Activated CD4-positive, alpha-beta memory T cell treated with anti-CD3 and anti-CD28 coated beads for 36 hours (primary cell): ENCODE measurements at regions of chr15 and their contacts with region 1.

Region 1: GRCh38 chr15:59736184-59736583 is 47.1 kb upstream of the BNIP2 start:
- DNase-seq: no peak
- H3K4me3 Mint-ChIP-seq: no peak overlapping the region
- H3K27ac Mint-ChIP-seq: no peak overlapping the region
- H3K4me1 Mint-ChIP-seq: no peaks in the 10 kb centered on the region
- H3K27me3 Mint-ChIP-seq: peaks cover 2% of the 10 kb centered on the region

Region 2: DNA sequence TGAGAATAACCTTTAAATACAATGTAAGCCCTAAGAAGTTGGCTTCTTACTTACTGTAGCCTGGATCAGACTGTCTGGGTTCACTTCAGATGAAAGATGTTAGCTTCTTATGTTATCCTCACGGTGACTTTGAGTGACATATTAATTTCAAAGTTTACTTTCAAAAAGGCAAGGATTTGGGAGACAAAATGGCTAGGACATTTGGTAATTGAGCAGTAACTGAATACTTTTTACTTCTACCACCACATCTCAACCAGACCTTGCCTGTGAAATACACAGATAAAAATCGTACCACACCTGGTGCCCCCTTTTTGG is 11.1 kb before region 1 on chr15:
- CTCF ChIA-PET with region 1: interaction called, 10 read pairs
- POLR2A ChIA-PET with region 1: no interaction called
- intact Hi-C with region 1: no loop called
- DNase-seq: no peak
- H3K4me3 Mint-ChIP-seq: no peak overlapping the region
- H3K27ac Mint-ChIP-seq: no peak overlapping the region
- H3K4me1 Mint-ChIP-seq: no peaks in the 10 kb centered on the region
- H3K27me3 Mint-ChIP-seq: peaks cover 7% of the 10 kb centered on the region

Region 3: GRCh38 chr15:59797756-59798604 is 61.8 kb after region 1 on chr15:
- CTCF ChIA-PET with region 1: no interaction called
- POLR2A ChIA-PET with region 1: no interaction called
- intact Hi-C with region 1: no loop called
- DNase-seq: no peak
- H3K4me3 Mint-ChIP-seq: peak overlapping the region; percentile 9
- H3K27ac Mint-ChIP-seq: peak overlapping the region; percentile 19
- H3K4me1 Mint-ChIP-seq: peaks cover 66% of the 10 kb centered on the region
- H3K27me3 Mint-ChIP-seq: no peaks in the 10 kb centered on the region